GM12878 (cell line): ENCODE measurements at regions of chr4 and their contacts with region 1.

Region 1: GRCh38 chr4:113888006-113888405 is 91.4 kb downstream of the ARSJ start:
- DNase-seq: no peak
- ATAC-seq: no peak
- H3K4me3 ChIP-seq: no peak overlapping the region
- H3K27ac ChIP-seq: no peak overlapping the region
- H3K4me1 ChIP-seq: no peaks in the 10 kb centered on the region
- H3K27me3 ChIP-seq: no peaks in the 10 kb centered on the region
- CTCF ChIP-seq: no peak
- EP300 ChIP-seq: no peak
- POLR2A ChIP-seq: no peak
- RAD21 ChIP-seq: no peak

Region 2: GRCh38 chr4:113869743-113870375 is 18.1 kb before region 1 on chr4:
- CTCF ChIA-PET with region 1: interaction called, 10 read pairs
- POLR2A ChIA-PET with region 1: no interaction called
- RAD21 ChIA-PET with region 1: interaction called, 4 read pairs
- SMC1A ChIA-PET with region 1: interaction called, 7 read pairs
- in situ Hi-C with region 1: no loop called
- intact Hi-C with region 1: no loop called
- DNase-seq: peak; percentile 54
- ATAC-seq: peak; percentile 97
- H3K4me3 ChIP-seq: no peak overlapping the region
- H3K27ac ChIP-seq: peak overlapping the region; percentile 66
- H3K4me1 ChIP-seq: peaks cover 3% of the 10 kb centered on the region; the same call in 1 of the 2 replicates
- H3K27me3 ChIP-seq: no peaks in the 10 kb centered on the region
- CTCF ChIP-seq: no peak
- EP300 ChIP-seq: no peak
- POLR2A ChIP-seq: no peak
- RAD21 ChIP-seq: no peak

Region 3: GRCh38 chr4:114343015-114343414 is 455.0 kb after region 1 on chr4:
- CTCF ChIA-PET with region 1: no interaction called
- POLR2A ChIA-PET with region 1: no interaction called
- RAD21 ChIA-PET with region 1: no interaction called
- SMC1A ChIA-PET with region 1: no interaction called
- in situ Hi-C with region 1: no loop called
- intact Hi-C with region 1: no loop called
- DNase-seq: no peak
- ATAC-seq: no peak
- H3K4me3 ChIP-seq: no peak overlapping the region
- H3K27ac ChIP-seq: no peak overlapping the region
- H3K4me1 ChIP-seq: no peaks in the 10 kb centered on the region
- H3K27me3 ChIP-seq: no peaks in the 10 kb centered on the region
- CTCF ChIP-seq: no peak
- EP300 ChIP-seq: no peak
- POLR2A ChIP-seq: no peak
- RAD21 ChIP-seq: no peak